Panc1 (cell line): ENCODE measurements at regions of chr6 and their contacts with region 1.

Region 1: GRCh38 chr6:42380228-42380979 is 71.3 kb downstream of the TRERF1 start:
- DNase-seq: no peak
- ATAC-seq: 0 out of 2 replicates have a peak, but pooled peaks have one; percentile 47
- H3K4me3 ChIP-seq: no peak overlapping the region
- H3K27ac ChIP-seq: no peak overlapping the region
- H3K4me1 ChIP-seq: peaks cover 8% of the 10 kb centered on the region; the same call in 1 of the 2 replicates
- H3K27me3 ChIP-seq: no peaks in the 10 kb centered on the region
- CTCF ChIP-seq: no peak

Region 2: GRCh38 chr6:41697861-41698781 is 682.3 kb before region 1 on chr6:
- CTCF ChIA-PET with region 1: no interaction called
- POLR2A ChIA-PET with region 1: no interaction called
- in situ Hi-C with region 1: no loop called
- intact Hi-C with region 1: no loop called
- DNase-seq: no peak
- ATAC-seq: no peak
- H3K4me3 ChIP-seq: no peak overlapping the region
- H3K27ac ChIP-seq: no peak overlapping the region
- H3K4me1 ChIP-seq: no peaks in the 10 kb centered on the region
- H3K27me3 ChIP-seq: no peaks in the 10 kb centered on the region
- CTCF ChIP-seq: no peak

Region 3: GRCh38 chr6:42361036-42361435 is 19.4 kb before region 1 on chr6:
- CTCF ChIA-PET with region 1: no interaction called
- POLR2A ChIA-PET with region 1: interaction called, 14 read pairs
- in situ Hi-C with region 1: no loop called
- intact Hi-C with region 1: no loop called
- DNase-seq: no peak
- ATAC-seq: no peak
- H3K4me3 ChIP-seq: no peak overlapping the region
- H3K27ac ChIP-seq: no peak overlapping the region
- H3K4me1 ChIP-seq: peaks cover 15% of the 10 kb centered on the region
- H3K27me3 ChIP-seq: no peaks in the 10 kb centered on the region
- CTCF ChIP-seq: no peak

Region 4: DNA sequence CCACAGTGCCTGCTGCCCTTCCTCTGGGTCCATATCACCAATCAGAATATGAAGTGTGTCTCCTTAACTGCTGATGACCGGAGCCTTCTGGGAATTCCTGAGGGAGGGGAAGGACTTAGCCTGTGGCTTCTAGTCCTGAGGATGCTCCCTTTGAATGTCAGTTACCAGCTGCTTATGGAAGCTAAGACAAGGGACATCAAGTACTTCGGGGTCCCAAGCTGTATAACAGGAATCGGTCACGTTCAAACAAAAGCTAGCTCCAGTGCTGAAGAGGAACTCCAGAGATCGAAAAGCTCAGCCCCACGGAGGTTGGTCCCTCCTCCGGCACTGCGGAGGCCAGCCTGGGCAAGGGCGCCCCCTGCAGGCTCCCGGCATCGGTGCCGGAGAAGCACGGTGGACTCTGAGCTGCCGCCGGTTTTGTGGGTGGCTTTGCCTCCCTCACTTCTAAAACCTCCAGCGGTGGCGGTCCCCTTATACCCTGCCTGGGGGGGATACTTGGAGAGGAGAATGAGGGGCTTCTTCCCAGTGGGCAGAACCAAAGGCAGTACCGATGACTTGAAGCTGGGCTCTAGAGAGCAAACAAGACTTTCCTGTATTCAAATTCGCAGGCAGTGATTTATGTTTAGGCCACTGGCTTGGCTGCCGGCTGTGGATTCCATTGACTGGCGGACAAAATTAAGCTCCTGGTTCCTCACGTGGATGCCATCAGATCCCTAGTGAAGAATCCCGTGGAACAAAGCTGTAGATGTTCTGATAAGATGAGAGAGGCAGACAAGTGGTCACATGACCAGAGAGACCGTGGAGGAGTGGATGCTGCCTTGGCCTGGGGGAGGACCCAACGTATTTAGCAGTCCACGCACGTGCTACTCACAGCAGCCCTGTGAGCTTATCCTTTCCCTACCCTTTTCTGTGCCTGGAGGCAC is 167.3 kb after region 1 on chr6:
- CTCF ChIA-PET with region 1: interaction called, 13 read pairs
- POLR2A ChIA-PET with region 1: no interaction called
- in situ Hi-C with region 1: no loop called
- intact Hi-C with region 1: no loop called
- DNase-seq: peak; percentile 70
- ATAC-seq: peak; percentile 99
- H3K4me3 ChIP-seq: peak overlapping the region; percentile 47 to 71
- H3K27ac ChIP-seq: peak overlapping the region; percentile 75
- H3K4me1 ChIP-seq: peaks cover 13% of the 10 kb centered on the region
- H3K27me3 ChIP-seq: no peaks in the 10 kb centered on the region
- CTCF ChIP-seq: peak; percentile 99